ENCODE measurements at regions of chr10 and their contacts with region 1.

Region 1: GRCh38 chr10:110414563-110415309 is 83.0 kb upstream of the DUSP5 start:
- DNase-seq: peak; percentile 95
- H3K4me3 Mint-ChIP-seq: peak overlapping the region; percentile 39
- H3K27ac Mint-ChIP-seq: peak overlapping the region; percentile 94
- H3K4me1 Mint-ChIP-seq: peaks cover 62% of the 10 kb centered on the region
- H3K27me3 Mint-ChIP-seq: no peaks in the 10 kb centered on the region

Region 2: GRCh38 chr10:110363572-110364411 is 50.9 kb before region 1 on chr10:
- intact Hi-C with region 1: loop called (anchors 2 kb)
- DNase-seq: no peak
- H3K4me3 Mint-ChIP-seq: peak overlapping the region; percentile 17
- H3K27ac Mint-ChIP-seq: peak overlapping the region; percentile 96
- H3K4me1 Mint-ChIP-seq: peaks cover 74% of the 10 kb centered on the region
- H3K27me3 Mint-ChIP-seq: no peaks in the 10 kb centered on the region

Region 3: GRCh38 chr10:110395725-110396651 is 18.7 kb before region 1 on chr10:
- intact Hi-C with region 1: loop called (anchors 2 kb)
- DNase-seq: peak; percentile 84
- H3K4me3 Mint-ChIP-seq: peak overlapping the region; percentile 13
- H3K27ac Mint-ChIP-seq: peak overlapping the region; percentile 87
- H3K4me1 Mint-ChIP-seq: peaks cover 57% of the 10 kb centered on the region
- H3K27me3 Mint-ChIP-seq: no peaks in the 10 kb centered on the region

Region 4: DNA sequence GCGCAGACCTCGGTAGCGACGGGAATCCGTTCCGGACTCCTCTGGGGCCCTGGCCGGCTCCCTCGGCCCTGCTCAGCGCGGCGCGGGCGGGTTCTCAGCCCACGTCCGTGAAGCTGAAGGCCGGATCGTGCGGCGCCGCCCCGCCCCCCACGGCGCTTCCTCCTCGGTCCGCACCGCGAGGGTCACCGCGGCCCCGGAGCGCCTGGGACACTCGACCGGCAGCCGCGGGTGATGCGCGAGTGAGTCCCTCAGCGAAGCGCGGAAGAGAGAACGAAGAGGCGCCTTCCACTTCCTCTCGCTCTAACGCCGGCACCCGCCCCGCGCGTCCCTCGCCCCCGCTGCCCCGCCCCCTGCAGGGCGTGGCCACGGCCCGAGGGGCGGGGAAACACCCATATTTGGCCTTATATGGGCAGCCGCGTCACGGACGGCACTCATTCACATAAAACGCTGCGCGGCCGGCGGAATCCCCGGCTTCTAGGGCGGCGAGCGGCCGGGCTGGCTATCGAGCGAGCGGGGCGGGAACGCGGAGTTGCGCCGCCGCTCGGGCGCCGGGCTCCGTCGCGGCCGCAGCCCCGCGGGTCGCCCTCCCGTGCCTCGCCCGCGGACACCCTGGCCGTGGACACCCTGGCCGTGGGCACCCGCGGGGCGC is 82.8 kb after region 1 on chr10 and contains the start of gene DUSP5:
- intact Hi-C with region 1: loop called (anchors 1 kb)
- DNase-seq: peak; percentile 99
- H3K4me3 Mint-ChIP-seq: peak within 1 kb of the TSS; percentile 99
- H3K27ac Mint-ChIP-seq: peak within 1 kb of the TSS; percentile 92
- H3K4me1 Mint-ChIP-seq: peaks cover 47% of the 10 kb centered on the region
- H3K27me3 Mint-ChIP-seq: no peaks in the 10 kb centered on the region
- total RNA-seq, gene DUSP5: 76.0 and 79.9 TPM in 2 replicates

Region 5: DNA sequence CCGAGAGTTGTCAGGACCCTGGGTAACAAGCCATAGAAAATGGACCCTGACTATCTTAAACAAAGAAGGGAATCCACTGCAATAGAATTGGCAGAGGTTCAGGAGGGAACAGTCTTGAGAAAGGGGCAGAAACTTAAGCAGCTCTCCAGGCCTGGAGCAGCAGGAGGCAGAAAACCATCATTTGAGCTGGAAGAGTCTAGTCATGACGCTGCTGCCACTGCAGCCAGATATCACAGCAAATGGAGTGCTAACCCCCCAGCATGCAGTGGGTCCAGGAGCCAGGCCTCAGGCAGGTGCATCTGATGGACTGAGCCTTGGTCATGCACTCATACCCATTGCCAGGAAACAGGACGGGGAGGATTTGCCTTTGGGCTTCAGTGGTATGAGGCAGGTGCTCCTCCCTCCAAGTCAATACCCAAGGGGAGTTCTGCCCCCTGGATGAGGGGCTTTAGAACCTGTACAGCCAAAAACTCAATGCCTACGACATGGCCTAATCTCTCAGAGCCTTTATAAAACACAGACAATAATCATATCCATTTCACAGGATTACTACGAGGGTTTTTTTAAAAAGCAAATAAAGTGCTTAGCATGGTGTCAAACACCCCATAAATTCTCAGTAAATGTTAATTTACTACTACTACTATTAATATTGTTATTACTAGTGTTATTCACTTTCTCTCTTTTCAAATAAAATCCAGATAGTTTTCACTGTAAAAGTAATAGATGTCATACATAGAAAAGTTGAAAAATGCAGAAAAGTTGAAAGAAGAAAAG is 113.7 kb after region 1 on chr10:
- intact Hi-C with region 1: loop called (anchors 1 kb)
- DNase-seq: no peak
- H3K4me3 Mint-ChIP-seq: peak overlapping the region; percentile 57
- H3K27ac Mint-ChIP-seq: peak overlapping the region; percentile 84
- H3K4me1 Mint-ChIP-seq: peaks cover 69% of the 10 kb centered on the region
- H3K27me3 Mint-ChIP-seq: no peaks in the 10 kb centered on the region

Measured in activated CD4-positive, alpha-beta T cell treated with anti-CD3 and anti-CD28 coated beads, Interleukin-2, amount 10 ng/mL, durations not matched to agents 24 days and 14 days (primary cell).